Heart right ventricle (tissue), 16 donors: ENCODE measurements at regions of chr9 and their contacts with region 1.

Region 1: DNA sequence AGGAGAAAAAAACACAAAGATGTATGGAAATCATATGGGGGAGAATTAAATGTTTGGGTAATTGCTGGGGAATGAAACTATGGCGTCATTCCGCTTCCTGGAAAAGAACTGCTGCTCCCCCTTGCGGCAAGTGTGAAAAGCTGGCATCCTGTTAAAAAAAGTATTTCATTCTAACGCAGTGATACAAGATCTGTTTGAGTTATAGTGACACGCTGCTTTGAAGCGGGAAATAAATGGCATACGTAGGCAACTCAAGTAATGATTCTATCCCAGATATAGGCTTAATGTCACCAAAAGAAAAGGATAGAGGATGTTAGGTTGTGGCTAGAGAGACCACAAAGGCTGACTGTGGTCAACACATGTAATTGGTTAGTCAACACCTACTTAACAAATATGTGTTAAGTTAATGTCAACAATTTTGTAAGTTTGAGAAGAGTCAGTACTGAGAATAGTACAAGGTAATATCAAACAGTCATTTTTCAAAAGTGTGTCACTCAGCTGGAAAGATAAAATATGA is 70.2 kb upstream of the ALDH1A1 start:
- DNase-seq: peak; percentile 21 to 48
- ATAC-seq: peak in 4 of 8 donors; percentile 37 to 66 (median 62)
- H3K4me3 ChIP-seq: no peak overlapping the region
- H3K27ac ChIP-seq: no peak overlapping the region
- H3K4me1 ChIP-seq: peaks cover 0 to 9% (median 0%) of the 10 kb centered on the region in 9 donors
- H3K27me3 ChIP-seq: no peaks in the 10 kb centered on the region
- CTCF ChIP-seq: peak; percentile 62 to 88 (median 83)

Region 2: GRCh38 chr9:72280913-72281500 is 742.1 kb before region 1 on chr9:
- intact Hi-C with region 1: loop called in 1 of 10 experiments (anchors 10 kb)
- DNase-seq: peak; percentile 62 to 66
- ATAC-seq: peak; percentile 62 to 94 (median 84)
- H3K4me3 ChIP-seq: no peak overlapping the region
- H3K27ac ChIP-seq: no peak overlapping the region
- H3K4me1 ChIP-seq: no peaks in the 10 kb centered on the region
- H3K27me3 ChIP-seq: no peaks in the 10 kb centered on the region
- CTCF ChIP-seq: peak; percentile 90 to 97 (median 94)

Region 3: DNA sequence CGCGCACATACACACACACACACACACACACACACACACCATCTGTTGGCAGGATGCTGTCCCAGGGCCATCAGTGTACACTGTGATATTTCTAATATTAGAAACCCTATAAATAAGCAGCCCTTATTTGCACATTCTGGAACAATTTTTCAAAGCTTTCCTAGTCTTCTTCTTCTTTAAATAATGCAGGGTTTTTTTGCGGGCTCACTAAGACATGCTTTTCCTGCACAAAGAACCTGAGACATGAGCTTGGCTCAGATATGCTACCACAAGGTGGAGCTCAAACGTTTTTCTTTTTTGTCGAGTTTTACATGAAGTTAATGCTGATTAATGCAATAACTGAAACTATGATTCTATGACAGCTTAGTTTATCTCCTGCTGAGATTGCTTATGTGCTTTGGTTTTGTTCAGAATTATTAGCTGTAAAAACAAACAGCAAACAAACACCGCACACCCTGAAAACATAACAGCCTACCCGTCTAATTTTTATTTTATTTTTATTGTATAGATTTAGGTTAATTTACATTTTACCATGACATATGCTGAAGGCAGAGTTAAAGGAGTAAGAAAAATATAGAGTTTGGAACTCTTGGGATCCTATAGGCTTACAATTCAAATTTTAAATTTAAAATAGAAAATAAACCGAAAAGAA is 166.0 kb before region 1 on chr9:
- intact Hi-C with region 1: loop called in 8 of 10 experiments (anchors 2 to 10 kb)
- DNase-seq: peak in 1 of 2 donors; percentile 45
- ATAC-seq: peak; percentile 61 to 91 (median 76)
- H3K4me3 ChIP-seq: no peak overlapping the region
- H3K27ac ChIP-seq: peak overlapping the region in 4 of 10 donors; percentile 20 to 52 (median 35)
- H3K4me1 ChIP-seq: peaks cover 0 to 29% (median 18%) of the 10 kb centered on the region in 9 donors
- H3K27me3 ChIP-seq: no peaks in the 10 kb centered on the region
- CTCF ChIP-seq: peak; percentile 25 to 78 (median 68)

Region 4: DNA sequence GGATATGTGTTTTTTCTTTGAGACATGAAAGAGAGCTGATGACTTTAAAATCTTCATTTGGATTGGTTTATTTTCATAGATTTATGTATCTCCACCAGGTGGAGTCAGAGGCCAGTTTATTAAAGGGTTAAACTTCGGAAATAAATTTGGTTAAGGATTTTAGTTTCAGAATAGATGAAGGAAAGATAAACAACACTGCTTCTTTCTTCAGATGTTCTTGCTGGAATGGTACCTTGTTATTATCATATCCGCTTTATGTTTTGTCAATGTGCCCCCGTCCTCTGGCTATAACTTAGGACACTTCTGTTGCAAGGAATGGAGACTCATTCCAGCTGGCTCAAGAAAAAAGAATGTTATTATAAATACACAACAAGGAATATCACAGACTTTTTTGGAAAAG is 151.4 kb before region 1 on chr9:
- intact Hi-C with region 1: loop called in 9 of 10 experiments (anchors 1 to 5 kb)
- DNase-seq: no peak
- ATAC-seq: peak in 1 of 8 donors; percentile 29
- H3K4me3 ChIP-seq: peak overlapping the region in 3 of 10 donors; percentile 19 to 22 (median 21)
- H3K27ac ChIP-seq: no peak overlapping the region
- H3K4me1 ChIP-seq: peaks cover 0 to 19% (median 3%) of the 10 kb centered on the region in 9 donors
- H3K27me3 ChIP-seq: no peaks in the 10 kb centered on the region
- CTCF ChIP-seq: peak; percentile 13 to 69 (median 49)